ENCODE measurements at regions of chr16 and their contacts with region 1.

Region 1: DNA sequence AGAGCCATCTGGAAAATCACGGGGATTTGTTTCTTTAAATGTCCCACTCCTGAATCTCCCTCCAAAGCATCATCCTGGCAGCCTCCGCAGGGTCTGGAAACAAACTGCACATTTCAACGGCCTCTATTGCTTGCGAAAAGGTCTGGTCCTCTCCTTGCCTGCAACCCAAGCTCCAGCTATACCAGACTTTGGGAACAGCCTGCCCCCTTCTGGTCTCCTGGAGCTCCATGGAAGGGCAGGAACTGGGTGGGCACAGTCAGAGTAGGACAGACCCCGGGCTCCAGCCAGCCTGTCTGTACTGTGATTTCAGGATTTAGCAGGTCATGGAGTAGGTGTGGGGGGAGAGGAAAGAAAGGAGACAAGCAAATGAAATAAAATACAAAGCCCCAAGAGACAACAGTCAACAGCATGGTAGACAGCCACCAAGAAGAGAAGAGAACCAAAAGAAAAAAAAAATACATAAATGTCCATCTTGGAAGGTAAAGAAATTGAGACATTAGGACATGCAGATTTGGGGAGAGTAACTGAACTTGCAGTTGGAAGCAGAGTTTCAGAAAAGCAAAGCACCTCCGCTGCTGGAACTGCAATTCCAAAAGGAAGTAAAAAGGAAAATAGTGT is 2.7 kb downstream of the XYLT1 start:
- DNase-seq: peak; percentile 73
- ATAC-seq: peak; percentile 68

Region 2: GRCh38 chr16:17194190-17194780 is 273.7 kb before region 1 on chr16:
- intact Hi-C with region 1: loop called (anchors 10 kb)
- DNase-seq: peak; percentile 84
- ATAC-seq: no peak

Region 3: DNA sequence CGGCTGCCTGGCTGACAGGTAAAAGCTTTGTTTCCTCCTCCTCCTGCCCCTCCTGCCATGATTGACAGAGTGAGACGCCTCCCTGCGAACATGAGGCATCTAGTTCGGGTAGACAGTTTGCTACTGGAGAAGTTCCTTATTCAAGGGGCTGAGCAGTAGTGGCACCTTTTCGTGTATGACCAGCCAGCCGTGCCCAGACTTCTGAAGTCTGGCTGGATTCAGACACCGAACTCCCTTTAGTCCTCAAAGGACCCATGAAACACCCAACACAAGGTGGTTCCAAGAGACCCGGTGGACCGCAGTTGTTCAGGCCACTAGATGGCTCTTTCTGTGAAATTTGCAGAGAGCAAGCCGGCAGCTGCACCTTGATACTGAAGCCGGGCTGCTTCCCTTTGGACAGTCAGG is 190.1 kb before region 1 on chr16:
- intact Hi-C with region 1: loop called (anchors 5 kb)
- DNase-seq: no peak
- ATAC-seq: peak; percentile 56

Region 4: DNA sequence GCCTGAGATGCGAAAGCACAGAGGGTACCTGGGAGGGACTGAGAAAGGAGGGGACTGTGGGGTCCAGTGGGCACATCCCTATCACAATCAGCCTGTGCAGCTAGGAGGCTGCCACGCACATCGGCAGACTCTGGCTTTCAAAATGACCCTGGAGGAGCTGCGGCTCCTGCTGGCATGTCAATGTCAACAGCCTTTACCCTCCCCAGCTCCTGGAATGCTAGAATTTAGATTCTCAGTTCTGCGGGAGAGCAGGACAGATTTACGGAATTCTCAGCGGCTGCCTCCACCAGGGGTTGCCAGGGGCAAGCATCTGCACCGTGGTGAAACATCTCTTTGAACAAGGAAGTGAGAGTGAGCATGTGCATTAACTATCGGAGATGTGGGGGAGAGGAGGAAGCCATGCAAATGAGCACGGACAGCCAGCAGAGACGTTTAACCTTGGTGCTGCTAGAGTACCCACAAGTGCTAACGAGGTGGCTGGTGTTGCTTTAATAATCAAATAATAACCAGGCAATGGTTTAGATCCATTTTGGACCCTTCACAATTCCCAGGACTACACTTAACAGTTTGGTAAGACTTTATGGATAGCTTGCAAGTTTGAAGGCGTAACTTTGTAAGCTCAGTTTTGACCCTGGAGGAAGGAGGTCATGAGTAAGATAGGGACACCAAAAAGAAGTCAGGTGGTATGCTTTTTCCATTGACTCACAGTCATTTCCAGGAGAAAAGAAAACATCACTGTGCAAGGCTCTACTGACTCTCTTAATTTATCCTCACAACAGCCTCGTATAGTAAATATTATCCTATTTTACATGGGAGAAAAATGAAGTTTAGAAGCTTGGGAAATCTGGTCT is 51.3 kb before region 1 on chr16:
- intact Hi-C with region 1: no loop called
- DNase-seq: peak; percentile 68
- ATAC-seq: peak; percentile 78

Region 5: DNA sequence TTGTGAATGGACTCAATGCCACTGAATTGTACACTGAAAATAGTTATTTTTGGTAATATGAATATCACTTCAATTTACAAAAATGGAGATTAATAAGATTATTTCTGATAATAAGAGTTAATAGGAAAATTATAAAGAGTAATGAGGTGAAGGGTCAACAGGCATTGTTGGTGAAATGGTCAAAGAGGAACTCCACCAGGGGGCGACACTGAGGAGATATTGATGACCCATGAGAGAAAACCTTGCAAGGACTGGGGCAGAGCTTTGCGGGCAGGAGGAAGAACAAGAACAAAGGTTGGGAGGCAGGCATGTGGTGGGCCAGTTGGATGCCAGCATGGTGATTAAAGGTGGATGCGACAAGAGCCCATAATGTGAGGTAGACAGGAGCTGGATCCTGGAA is 76.8 kb after region 1 on chr16:
- intact Hi-C with region 1: no loop called
- DNase-seq: no peak
- ATAC-seq: no peak

Region 6: GRCh38 chr16:17571499-17572093 is 103.6 kb after region 1 on chr16:
- intact Hi-C with region 1: no loop called
- DNase-seq: no peak
- ATAC-seq: no peak

Measured in Right ventricle myocardium inferior (tissue), 1 donor.